Activated CD8-positive, alpha-beta T cell treated with anti-CD3 and anti-CD28 coated beads for 36 hours (primary cell): ENCODE measurements at regions of chr6 and their contacts with region 1.

Region 1: GRCh38 chr6:32413427-32414047 is 6.6 kb upstream of the BTNL2 start:
- DNase-seq: peak; percentile 86
- ATAC-seq: peak; percentile 86
- H3K4me3 Mint-ChIP-seq: no peak overlapping the region
- H3K27ac Mint-ChIP-seq: no peak overlapping the region
- H3K4me1 Mint-ChIP-seq: no peaks in the 10 kb centered on the region
- H3K27me3 Mint-ChIP-seq: peaks cover 42% of the 10 kb centered on the region
- CTCF ChIP-seq: peak; percentile 90

Region 2: GRCh38 chr6:32076321-32076809 is 337.2 kb before region 1 on chr6:
- CTCF ChIA-PET with region 1: no interaction called
- POLR2A ChIA-PET with region 1: no interaction called
- intact Hi-C with region 1: no loop called
- DNase-seq: no peak
- ATAC-seq: no peak
- H3K4me3 Mint-ChIP-seq: no peak overlapping the region
- H3K27ac Mint-ChIP-seq: no peak overlapping the region
- H3K4me1 Mint-ChIP-seq: no peaks in the 10 kb centered on the region
- H3K27me3 Mint-ChIP-seq: no peaks in the 10 kb centered on the region
- CTCF ChIP-seq: no peak

Region 3: DNA sequence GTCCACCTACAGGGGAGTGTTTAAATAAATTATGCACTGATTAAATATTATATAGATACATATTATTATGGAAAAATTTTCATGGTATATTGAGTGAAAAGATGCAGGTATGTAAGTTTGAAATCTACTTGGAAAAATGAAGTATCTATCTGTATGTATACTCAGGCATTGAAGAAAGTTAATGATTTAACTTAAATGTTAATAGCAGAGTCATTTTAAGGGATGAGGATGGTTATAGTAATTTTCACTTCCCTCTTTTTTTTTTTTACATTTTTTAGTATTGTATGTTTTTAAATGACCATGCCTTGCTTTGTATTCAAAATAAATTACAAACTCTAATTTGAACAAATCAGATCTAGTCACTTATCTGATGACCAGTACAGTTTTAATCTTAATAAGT is 146.5 kb before region 1 on chr6:
- CTCF ChIA-PET with region 1: no interaction called
- POLR2A ChIA-PET with region 1: no interaction called
- intact Hi-C with region 1: no loop called
- DNase-seq: no peak
- ATAC-seq: no peak
- H3K4me3 Mint-ChIP-seq: no peak overlapping the region
- H3K27ac Mint-ChIP-seq: no peak overlapping the region
- H3K4me1 Mint-ChIP-seq: peaks cover 10% of the 10 kb centered on the region
- H3K27me3 Mint-ChIP-seq: peaks cover 3% of the 10 kb centered on the region
- CTCF ChIP-seq: no peak

Region 4: DNA sequence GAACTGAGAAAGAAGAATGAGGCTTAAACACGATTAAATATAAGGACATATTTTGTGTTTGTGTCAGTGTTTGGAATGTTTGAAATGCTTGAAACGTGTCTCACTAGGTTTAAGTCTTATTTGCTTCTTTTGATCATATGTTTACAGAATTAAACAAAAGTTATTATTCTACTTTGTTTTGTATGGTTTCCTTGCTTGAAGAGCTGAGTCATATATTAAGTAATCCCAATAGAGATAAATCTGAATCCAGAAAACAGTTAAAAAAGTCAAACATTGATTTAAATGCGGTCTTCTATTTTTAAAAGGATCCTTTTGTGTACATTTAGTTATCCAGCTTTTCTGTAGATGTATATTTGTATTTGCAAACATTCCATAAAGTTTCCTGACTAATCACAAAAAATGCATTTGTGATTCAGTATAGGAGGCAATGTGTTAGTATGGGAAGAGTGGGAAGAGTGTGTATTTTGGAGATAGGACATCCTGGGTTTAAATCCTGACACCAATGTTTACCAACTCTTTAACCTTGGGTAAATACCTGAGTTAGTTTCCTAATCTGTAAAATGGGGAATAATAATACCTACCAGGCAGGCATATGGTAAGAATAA is 114.8 kb before region 1 on chr6:
- CTCF ChIA-PET with region 1: no interaction called
- POLR2A ChIA-PET with region 1: no interaction called
- intact Hi-C with region 1: no loop called
- DNase-seq: no peak
- ATAC-seq: no peak
- H3K4me3 Mint-ChIP-seq: no peak overlapping the region
- H3K27ac Mint-ChIP-seq: no peak overlapping the region
- H3K4me1 Mint-ChIP-seq: peaks cover under 1% of the 10 kb centered on the region
- H3K27me3 Mint-ChIP-seq: peaks cover 5% of the 10 kb centered on the region
- CTCF ChIP-seq: no peak

Region 5: DNA sequence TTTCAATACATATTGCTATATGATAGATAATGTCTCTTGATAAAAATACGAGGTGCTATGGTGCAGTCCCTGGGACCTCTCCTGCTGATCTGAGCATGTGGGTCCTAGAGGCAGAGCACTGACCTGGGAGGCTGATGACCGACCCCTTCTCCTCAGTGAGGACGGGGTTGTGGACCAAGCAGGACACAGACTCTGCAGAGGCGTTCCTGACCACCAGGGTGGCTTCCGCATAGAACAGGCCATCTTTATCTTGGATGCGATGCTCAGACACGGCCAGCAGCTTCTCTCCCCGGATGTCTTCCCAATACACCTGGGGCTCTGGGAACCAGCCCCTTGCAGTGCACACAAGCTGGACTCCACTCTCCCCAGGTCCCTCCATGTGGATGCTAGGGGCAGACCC is 10.7 kb before region 1 on chr6:
- CTCF ChIA-PET with region 1: interaction called, 60 read pairs
- POLR2A ChIA-PET with region 1: no interaction called
- intact Hi-C with region 1: no loop called
- DNase-seq: no peak
- ATAC-seq: no peak
- H3K4me3 Mint-ChIP-seq: no peak overlapping the region
- H3K27ac Mint-ChIP-seq: no peak overlapping the region
- H3K4me1 Mint-ChIP-seq: no peaks in the 10 kb centered on the region
- H3K27me3 Mint-ChIP-seq: peaks cover 34% of the 10 kb centered on the region
- CTCF ChIP-seq: no peak

Region 6: GRCh38 chr6:32637219-32637880 is 223.8 kb after region 1 on chr6 and contains the start of gene HLA-DQA1:
- CTCF ChIA-PET with region 1: no interaction called
- POLR2A ChIA-PET with region 1: no interaction called
- intact Hi-C with region 1: no loop called
- DNase-seq: peak; percentile 5
- ATAC-seq: peak; percentile 66
- H3K4me3 Mint-ChIP-seq: peak within 1 kb of the TSS; percentile 22
- H3K27ac Mint-ChIP-seq: peak within 1 kb of the TSS; percentile 32
- H3K4me1 Mint-ChIP-seq: peaks cover 14% of the 10 kb centered on the region
- H3K27me3 Mint-ChIP-seq: peaks cover 13% of the 10 kb centered on the region
- CTCF ChIP-seq: no peak
- total RNA-seq, gene HLA-DQA1: 3.4 to 3.9 TPM

Region 7: DNA sequence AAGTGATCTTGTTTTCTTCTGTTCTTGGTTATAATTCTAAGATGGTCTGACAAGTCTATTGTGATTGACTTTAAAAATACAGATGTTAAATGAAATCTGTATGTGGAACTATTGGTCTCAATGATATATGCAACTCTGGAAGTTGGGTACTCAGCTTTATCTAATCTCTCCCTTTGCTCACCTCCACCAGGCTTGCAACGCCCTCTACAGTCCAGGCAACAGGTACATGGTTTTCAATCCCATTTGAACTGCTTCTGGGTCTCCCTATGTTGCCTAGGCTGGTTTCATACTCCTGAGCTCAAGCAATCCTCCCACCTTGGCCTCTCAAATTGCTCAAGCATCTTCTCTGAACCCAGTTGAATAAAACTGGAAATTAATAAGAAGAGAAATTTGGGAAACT is 278.5 kb after region 1 on chr6:
- CTCF ChIA-PET with region 1: interaction called, 16 read pairs
- POLR2A ChIA-PET with region 1: no interaction called
- intact Hi-C with region 1: loop called (anchors 2 kb)
- DNase-seq: peak; percentile 63
- ATAC-seq: peak; percentile 68
- H3K4me3 Mint-ChIP-seq: no peak overlapping the region
- H3K27ac Mint-ChIP-seq: no peak overlapping the region
- H3K4me1 Mint-ChIP-seq: peaks cover 7% of the 10 kb centered on the region
- H3K27me3 Mint-ChIP-seq: peaks cover 28% of the 10 kb centered on the region
- CTCF ChIP-seq: peak; percentile 55

Region 8: DNA sequence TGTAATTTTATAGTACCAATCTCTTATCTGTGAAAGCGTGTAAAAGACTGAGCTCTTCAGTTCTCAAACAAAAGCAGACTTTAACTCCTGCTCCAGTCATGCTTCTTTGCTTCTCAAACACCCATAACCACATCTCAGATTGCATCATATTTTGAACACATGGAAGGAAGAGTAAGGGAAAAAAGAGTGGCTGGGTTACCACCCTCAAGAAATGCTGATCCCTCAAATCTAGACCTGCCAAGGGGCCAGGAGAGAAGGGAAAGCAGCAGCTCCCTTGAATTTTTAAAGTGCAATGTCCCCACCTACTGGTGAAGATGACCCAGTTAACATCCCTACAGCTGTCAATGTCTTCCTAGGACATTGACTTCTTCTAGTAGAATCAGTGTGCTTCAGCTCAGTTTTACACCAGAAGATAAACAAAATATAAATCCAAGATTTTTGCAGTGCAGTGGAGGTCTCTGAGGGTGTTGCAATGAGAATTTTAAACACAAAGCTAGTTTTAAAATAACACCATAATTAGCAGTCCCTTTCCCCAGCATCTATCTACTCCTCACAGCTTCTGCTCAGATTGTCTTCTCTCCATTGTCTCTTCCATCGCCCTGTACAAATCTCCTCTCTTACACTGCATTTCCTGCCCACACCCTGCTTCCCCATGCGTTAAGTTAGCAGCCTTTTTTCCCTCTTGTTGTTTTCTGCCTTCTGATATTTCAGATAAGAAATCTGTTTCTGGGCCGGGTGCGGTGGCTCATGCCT is 372.4 kb after region 1 on chr6:
- CTCF ChIA-PET with region 1: interaction called, 68 read pairs
- POLR2A ChIA-PET with region 1: interaction called, 3 read pairs
- intact Hi-C with region 1: no loop called
- DNase-seq: peak; percentile 40
- ATAC-seq: peak; percentile 67
- H3K4me3 Mint-ChIP-seq: no peak overlapping the region
- H3K27ac Mint-ChIP-seq: no peak overlapping the region
- H3K4me1 Mint-ChIP-seq: no peaks in the 10 kb centered on the region
- H3K27me3 Mint-ChIP-seq: peaks cover 34% of the 10 kb centered on the region
- CTCF ChIP-seq: peak; percentile 74